PC-3 (cell line): ENCODE measurements at regions of chr13 and their contacts with region 1.

Region 1: DNA sequence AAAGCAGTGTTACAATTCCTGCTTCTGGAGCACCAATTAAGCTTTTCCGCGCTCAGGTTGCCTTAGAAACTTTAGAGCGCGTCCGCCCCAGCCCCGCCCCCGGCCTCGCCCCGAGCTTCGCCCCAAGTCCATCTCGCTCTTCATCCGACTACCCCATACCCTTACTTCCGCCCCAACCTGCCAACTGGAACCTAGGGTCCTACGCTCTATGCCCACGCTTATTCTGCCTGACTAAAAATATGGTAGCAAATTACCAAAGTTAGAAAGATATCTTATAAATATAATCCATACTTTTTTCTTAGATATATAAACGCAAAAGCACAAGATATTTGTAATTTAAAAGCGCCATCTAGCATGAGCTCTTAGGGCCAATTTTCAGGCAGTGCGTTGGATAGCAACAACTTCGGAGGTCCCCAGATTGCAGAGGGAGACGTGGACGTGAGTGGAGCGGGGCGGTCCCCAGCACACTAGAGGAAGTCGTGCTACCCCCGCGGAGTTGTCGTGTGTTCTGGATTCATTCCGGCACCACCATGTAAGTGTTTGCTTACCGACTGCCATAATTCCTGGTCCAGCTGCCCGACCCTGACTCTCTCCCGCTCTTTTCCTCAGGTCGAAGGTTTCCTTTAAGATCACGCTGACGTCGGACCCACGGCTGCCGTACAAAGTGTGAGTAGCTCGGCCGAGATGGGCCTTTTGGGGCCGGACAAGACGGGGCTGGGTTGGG is at the start of gene UFM1:
- DNase-seq: peak; percentile 83
- ATAC-seq: peak; percentile 94
- H3K4me3 ChIP-seq: peak within 1 kb of the TSS; percentile 89
- H3K27ac ChIP-seq: peak within 1 kb of the TSS; percentile 82
- H3K4me1 ChIP-seq: peaks cover 16% of the 10 kb centered on the region
- H3K27me3 ChIP-seq: no peaks in the 10 kb centered on the region
- CTCF ChIP-seq: no peak
- total RNA-seq, gene UFM1: 30.3 and 35.9 TPM in 2 replicates

Region 2: DNA sequence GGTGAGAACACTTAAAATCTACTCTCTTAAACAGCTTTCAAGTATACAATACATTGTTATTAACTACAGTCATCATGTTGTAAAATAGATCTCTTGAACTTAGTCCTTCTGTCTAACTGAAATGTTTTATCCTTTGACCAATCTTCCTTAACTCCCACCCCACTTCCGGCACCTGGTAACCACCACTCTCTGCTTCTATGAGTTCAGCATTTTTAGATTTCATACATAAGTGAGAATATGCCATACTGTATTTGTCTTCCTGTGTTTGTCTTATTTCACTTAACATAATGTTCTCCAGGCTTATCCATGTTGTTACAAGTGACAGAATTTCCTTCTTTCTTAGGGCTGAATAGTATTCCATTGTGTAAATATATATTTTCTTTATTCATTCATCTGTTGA is 335.9 kb before region 1 on chr13:
- CTCF ChIA-PET with region 1: no interaction called
- POLR2A ChIA-PET with region 1: no interaction called
- intact Hi-C with region 1: loop called (anchors 10 kb)
- DNase-seq: no peak
- ATAC-seq: no peak
- H3K4me3 ChIP-seq: no peak overlapping the region
- H3K27ac ChIP-seq: no peak overlapping the region
- H3K4me1 ChIP-seq: no peaks in the 10 kb centered on the region
- H3K27me3 ChIP-seq: peaks cover 2% of the 10 kb centered on the region; the same call in 1 of the 2 replicates
- CTCF ChIP-seq: no peak

Region 3: DNA sequence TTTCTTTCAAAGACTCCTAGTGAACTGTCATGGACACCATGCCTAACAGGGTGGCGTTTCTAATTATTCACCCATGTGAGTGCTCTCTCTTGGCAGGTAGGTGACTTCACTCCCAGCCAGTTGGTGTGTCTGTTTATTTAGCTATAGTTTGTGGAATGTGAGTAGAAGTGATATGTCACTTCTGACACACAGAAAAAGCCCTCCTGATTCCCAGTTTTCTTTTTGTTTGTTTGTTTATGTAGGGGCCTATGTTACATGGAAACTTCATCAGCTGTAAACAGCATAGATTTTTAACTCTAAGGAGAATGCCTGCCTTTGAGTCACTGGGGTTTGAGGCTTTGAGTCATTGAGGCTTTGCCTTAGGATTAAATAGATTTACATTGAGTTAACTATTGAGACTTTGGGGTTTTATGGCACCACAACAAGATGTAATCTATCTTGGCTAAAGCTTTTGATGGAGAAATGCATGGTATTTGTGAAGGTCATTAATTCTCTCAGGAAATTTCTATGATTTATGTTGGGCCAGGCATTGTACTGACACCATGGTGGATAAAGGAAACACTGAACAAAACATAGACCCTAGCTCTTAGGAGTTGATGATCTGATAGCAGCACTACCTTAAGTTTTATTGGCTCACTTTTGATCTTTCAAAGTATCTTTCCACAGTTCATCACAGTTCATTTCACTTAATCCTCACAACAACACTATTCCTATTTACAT is 45.4 kb after region 1 on chr13:
- CTCF ChIA-PET with region 1: no interaction called
- POLR2A ChIA-PET with region 1: interaction called, 4 read pairs
- intact Hi-C with region 1: loop called (anchors 1 kb)
- DNase-seq: peak; percentile 87
- ATAC-seq: peak; percentile 88
- H3K4me3 ChIP-seq: no peak overlapping the region
- H3K27ac ChIP-seq: peak overlapping the region; percentile 88
- H3K4me1 ChIP-seq: peaks cover 17% of the 10 kb centered on the region
- H3K27me3 ChIP-seq: no peaks in the 10 kb centered on the region
- CTCF ChIP-seq: no peak

Region 4: GRCh38 chr13:38417727-38418126 is 68.2 kb after region 1 on chr13:
- CTCF ChIA-PET with region 1: no interaction called
- POLR2A ChIA-PET with region 1: no interaction called
- intact Hi-C with region 1: loop called (anchors 5 kb)
- DNase-seq: peak; percentile 73
- ATAC-seq: peak; percentile 87
- H3K4me3 ChIP-seq: 0 out of 2 replicates have a peak overlapping the region, but pooled peaks have one; percentile 20
- H3K27ac ChIP-seq: peak overlapping the region; percentile 72
- H3K4me1 ChIP-seq: peaks cover 16% of the 10 kb centered on the region
- H3K27me3 ChIP-seq: no peaks in the 10 kb centered on the region
- CTCF ChIP-seq: peak; percentile 73